ENCODE measurements at regions of chr12 and their contacts with region 1.

Region 1: DNA sequence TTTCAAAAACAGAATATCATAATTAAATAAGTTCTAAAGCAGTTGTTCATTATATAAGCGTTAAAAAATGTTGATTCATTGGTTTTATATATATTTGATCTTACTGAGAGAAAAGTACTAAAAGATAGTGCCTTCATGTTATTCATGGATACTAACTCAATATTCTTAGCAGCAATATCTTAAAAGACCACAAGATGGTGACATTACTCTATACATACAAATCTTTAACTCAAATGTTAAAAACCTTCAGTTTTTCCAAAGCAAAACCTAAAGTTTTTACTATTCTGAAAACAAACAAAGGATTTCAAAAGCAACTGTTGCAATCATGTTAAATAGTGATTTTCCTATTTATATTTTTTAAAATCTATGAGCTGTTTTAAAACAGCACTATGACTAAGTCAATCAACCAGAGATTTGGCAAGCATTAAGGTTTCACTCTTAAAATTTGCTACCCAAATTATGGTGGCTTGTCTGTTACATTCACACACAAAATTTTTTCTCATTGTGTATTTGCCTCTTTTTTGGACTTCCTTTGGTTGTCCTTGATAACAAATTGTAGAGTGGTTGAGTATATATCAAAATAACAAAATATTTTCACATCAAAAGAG is 50.1 kb upstream of the RERGL start:
- DNase-seq: peak in 2 of 4 experiments; percentile 0 to 4
- ATAC-seq: no peak
- H3K4me3 ChIP-seq: no peak overlapping the region
- H3K27ac ChIP-seq: no peak overlapping the region
- H3K4me1 ChIP-seq: no peaks in the 10 kb centered on the region
- H3K27me3 ChIP-seq: no peaks in the 10 kb centered on the region
- CTCF ChIP-seq: peak in 1 of 3 experiments; percentile 30; a peak in 2 of 6 replicates
- EP300 ChIP-seq: no peak
- POLR2A ChIP-seq: no peak
- RAD21 ChIP-seq: peak; percentile 30 to 53; a peak in 3 of 4 replicates

Region 2: GRCh38 chr12:18207266-18207665 is 67.2 kb after region 1 on chr12:
- CTCF ChIA-PET with region 1: no interaction called
- POLR2A ChIA-PET with region 1: no interaction called
- in situ Hi-C with region 1: no loop called
- intact Hi-C with region 1: no loop called
- DNase-seq: no peak
- ATAC-seq: no peak
- H3K4me3 ChIP-seq: no peak overlapping the region
- H3K27ac ChIP-seq: no peak overlapping the region
- H3K4me1 ChIP-seq: no peaks in the 10 kb centered on the region
- H3K27me3 ChIP-seq: no peaks in the 10 kb centered on the region
- CTCF ChIP-seq: no peak
- EP300 ChIP-seq: no peak
- POLR2A ChIP-seq: no peak
- RAD21 ChIP-seq: no peak

Region 3: GRCh38 chr12:18224745-18225144 is 84.7 kb after region 1 on chr12:
- CTCF ChIA-PET with region 1: no interaction called
- POLR2A ChIA-PET with region 1: no interaction called
- in situ Hi-C with region 1: no loop called
- intact Hi-C with region 1: loop called (anchors 10 kb)
- DNase-seq: no peak
- ATAC-seq: no peak
- H3K4me3 ChIP-seq: no peak overlapping the region
- H3K27ac ChIP-seq: no peak overlapping the region
- H3K4me1 ChIP-seq: no peaks in the 10 kb centered on the region
- H3K27me3 ChIP-seq: no peaks in the 10 kb centered on the region
- CTCF ChIP-seq: peak in 1 of 3 experiments; percentile 13; a peak in 1 of 6 replicates
- EP300 ChIP-seq: no peak
- POLR2A ChIP-seq: no peak
- RAD21 ChIP-seq: no peak

Region 4: DNA sequence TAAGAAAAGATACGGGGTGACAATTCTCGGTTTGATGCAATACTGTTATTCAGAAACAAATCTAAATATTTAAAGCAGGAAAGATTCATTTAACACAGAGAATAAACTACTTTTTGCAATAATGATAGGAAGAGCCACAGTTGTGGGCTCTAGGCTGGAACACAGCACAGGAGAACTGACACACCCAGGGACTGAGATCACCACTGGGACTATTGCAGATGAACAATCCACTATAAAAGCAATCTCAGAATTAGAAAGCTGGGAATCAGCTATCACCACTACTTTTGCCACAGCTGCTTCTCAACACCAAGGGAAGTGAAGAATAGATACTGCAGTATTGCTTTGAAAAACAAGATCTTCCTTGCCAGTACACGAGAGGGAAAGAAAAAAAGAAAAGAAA is 117.2 kb after region 1 on chr12:
- CTCF ChIA-PET with region 1: no interaction called
- POLR2A ChIA-PET with region 1: no interaction called
- in situ Hi-C with region 1: no loop called
- intact Hi-C with region 1: no loop called
- DNase-seq: no peak
- ATAC-seq: no peak
- H3K4me3 ChIP-seq: no peak overlapping the region
- H3K27ac ChIP-seq: no peak overlapping the region
- H3K4me1 ChIP-seq: no peaks in the 10 kb centered on the region; a peak in 1 of 5 replicates
- H3K27me3 ChIP-seq: no peaks in the 10 kb centered on the region
- CTCF ChIP-seq: no peak
- EP300 ChIP-seq: no peak
- POLR2A ChIP-seq: no peak
- RAD21 ChIP-seq: no peak